Activated CD4-positive, alpha-beta memory T cell treated with anti-CD3 and anti-CD28 coated beads for 36 hours (primary cell): ENCODE measurements at regions of chr6 and their contacts with region 1.

Region 1: GRCh38 chr6:149368065-149368464 is 32.0 kb upstream of the SUMO4 start:
- DNase-seq: no peak
- H3K4me3 Mint-ChIP-seq: no peak overlapping the region
- H3K27ac Mint-ChIP-seq: no peak overlapping the region
- H3K4me1 Mint-ChIP-seq: peaks cover 45% of the 10 kb centered on the region
- H3K27me3 Mint-ChIP-seq: no peaks in the 10 kb centered on the region

Region 2: DNA sequence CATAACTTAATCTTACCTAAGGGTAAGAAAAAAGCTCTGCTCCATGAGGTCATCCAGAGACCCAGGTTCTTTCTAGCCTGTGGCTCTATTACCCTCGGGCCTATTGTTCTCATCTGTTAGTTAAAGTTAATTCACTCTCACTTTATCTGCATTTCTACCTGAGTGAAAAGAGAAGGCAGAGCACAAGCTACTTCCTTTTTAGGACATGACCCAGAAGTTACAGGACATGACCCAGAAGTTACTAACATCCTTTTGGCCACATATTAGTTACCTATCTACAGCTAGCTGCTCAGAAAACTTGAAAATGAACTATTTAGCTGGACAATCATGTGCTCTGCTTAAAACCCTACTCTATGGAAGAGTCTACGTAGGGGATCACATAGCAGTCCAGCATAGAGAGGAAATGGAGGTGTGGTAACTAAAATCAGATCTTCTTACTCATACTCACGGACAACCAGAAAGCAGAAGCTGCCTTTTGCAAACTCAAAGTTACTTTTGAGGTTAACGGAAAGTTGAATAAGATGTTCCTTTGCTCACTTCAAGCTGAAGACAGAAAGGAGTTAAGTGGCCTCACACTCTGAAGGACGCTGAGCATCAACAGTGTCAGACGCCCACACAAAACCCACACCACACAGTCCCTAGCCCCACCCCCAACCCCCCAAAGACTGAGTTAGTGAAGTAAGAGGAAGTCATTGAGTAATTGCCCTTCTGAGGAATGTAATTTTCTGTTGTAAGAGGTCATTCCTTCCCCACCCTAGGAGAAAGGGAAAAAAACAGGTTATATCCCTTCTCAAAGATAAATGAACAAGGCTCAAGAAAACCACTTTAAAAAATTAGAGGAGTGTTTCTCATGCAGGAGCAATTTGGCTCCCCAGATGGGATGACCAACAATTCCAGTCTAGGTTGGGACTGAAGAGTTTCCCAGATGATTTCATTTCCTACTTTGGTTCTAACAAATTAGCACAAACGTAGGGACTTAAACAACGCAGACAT is 96.4 kb before region 1 on chr6:
- CTCF ChIA-PET with region 1: no interaction called
- POLR2A ChIA-PET with region 1: no interaction called
- intact Hi-C with region 1: loop called (anchors 5 kb)
- DNase-seq: peak; percentile 85
- H3K4me3 Mint-ChIP-seq: peak overlapping the region; percentile 45
- H3K27ac Mint-ChIP-seq: peak overlapping the region; percentile 93
- H3K4me1 Mint-ChIP-seq: peaks cover 35% of the 10 kb centered on the region
- H3K27me3 Mint-ChIP-seq: no peaks in the 10 kb centered on the region